ENCODE measurements at regions of chr3 and their contacts with region 1.

Region 1: DNA sequence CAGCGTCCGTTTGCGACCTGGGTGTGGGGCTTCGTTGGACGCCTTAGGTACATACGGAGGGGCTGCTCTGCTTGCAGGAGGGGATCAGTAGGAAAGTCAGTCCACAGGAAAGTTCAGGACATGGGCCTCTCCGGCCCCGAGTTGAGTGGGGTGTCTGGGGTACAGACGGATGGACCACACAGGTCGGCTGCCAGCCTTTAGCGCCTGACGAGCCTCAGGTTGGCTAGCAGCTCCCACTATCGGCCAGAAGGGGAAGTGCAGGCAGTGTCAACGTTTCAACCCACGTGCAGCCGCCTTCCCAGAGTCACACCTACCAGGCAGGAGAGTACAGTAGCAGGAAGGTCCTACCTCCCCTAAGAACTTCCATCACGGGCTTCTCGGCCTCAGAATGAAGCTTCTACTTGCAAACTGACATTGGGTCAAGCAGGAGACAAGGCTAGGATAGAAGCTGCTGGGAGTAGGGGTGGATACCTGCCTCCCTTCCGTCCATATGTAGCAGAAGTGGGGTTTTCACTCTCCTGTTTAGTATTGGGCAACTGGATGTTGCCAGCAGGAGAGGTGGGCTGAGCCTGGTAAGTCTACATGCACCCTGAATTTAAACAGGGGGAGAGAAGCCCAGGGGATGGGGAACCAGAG is 1.8 kb upstream of the SCN5A start:
- DNase-seq: peak; percentile 43 to 88 (median 70)

Region 2: GRCh38 chr3:38521391-38521987 is 129.8 kb before region 1 on chr3:
- intact Hi-C with region 1: loop called (anchors 5 kb)
- DNase-seq: peak in 40 of 42 donors; percentile 33 to 89 (median 73)

Measured in head of caudate nucleus (tissue), 42 donors.